BJ (cell line): ENCODE measurements at regions of chr22 and their contacts with region 1.

Region 1: GRCh38 chr22:37817705-37818408 is 5.3 kb upstream of the GALR3 start:
- DNase-seq: no peak
- H3K4me3 ChIP-seq: peak overlapping the region; percentile 4; the same call in 1 of the 2 replicates
- H3K27me3 ChIP-seq: peaks cover 2% of the 10 kb centered on the region; the same call in 1 of the 2 replicates
- CTCF ChIP-seq: peak; percentile 79

Region 2: GRCh38 chr22:37807410-37808293 is 10.2 kb before region 1 on chr22 and contains the start of gene GCAT:
- CTCF ChIA-PET with region 1: interaction called, 59 read pairs
- POLR2A ChIA-PET with region 1: no interaction called
- DNase-seq: peak; percentile 84
- H3K4me3 ChIP-seq: peak within 1 kb of the TSS; percentile 61
- H3K27me3 ChIP-seq: no peaks in the 10 kb centered on the region
- CTCF ChIP-seq: no peak
- polyA plus RNA-seq, gene GCAT: 12.6 and 24.9 TPM in 2 replicates

Region 3: DNA sequence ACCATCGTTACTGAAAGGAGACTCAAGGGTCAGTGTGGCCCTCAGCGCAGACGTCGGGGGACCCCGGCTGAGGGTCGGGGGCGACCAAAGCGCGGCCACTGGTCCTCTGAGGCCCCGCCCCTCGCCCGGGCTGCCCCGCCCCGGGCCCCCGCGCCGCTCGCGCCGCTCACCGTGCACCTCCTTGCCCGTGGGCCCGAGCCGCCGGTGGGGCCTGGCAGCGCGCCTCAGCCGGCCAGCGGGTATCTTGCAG is 25.8 kb after region 1 on chr22:
- CTCF ChIA-PET with region 1: interaction called, 14 read pairs
- POLR2A ChIA-PET with region 1: no interaction called
- DNase-seq: no peak
- H3K4me3 ChIP-seq: peak overlapping the region; percentile 68
- H3K27me3 ChIP-seq: no peaks in the 10 kb centered on the region
- CTCF ChIP-seq: no peak

Region 4: GRCh38 chr22:37855462-37855861 is 37.6 kb after region 1 on chr22:
- CTCF ChIA-PET with region 1: interaction called, 25 read pairs
- POLR2A ChIA-PET with region 1: no interaction called
- DNase-seq: no peak
- H3K4me3 ChIP-seq: no peak overlapping the region
- H3K27me3 ChIP-seq: no peaks in the 10 kb centered on the region
- CTCF ChIP-seq: no peak

Region 5: DNA sequence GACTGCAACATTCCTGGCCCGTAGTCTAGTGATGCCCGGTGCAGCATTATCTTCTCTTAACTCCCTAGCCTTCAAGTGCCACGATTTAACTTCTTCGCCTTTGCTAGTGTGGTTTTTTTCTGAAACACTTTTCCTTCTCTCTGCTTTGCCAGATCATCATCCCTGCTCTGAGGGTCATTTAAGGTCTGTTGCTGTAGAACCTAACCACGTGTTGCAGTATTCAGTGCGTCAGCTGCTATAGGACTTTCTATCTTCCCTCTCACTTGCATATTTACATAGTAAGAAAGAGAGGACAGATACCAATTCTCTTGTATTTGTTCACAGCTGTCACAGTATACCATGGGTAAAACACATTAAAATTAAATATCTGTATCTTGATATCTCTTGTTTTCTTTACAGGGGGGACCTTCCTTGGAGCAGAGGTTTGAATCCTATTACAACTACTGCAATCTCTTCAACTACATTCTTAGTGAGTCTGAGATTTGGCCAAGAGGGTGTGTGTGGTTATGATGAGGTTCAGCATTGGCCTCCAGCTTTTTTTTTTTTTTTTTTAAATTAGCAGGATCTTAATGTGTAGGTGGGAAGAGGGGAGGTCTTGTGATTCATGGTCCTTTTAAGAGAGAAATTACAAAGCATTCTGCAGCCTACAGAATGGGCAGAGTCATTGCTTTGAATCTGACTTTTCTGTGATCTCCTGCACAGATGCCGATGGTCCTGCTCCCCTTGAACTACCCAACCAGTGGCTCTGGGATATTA is 44.9 kb after region 1 on chr22:
- CTCF ChIA-PET with region 1: interaction called, 77 read pairs
- POLR2A ChIA-PET with region 1: no interaction called
- DNase-seq: no peak
- H3K4me3 ChIP-seq: no peak overlapping the region
- H3K27me3 ChIP-seq: no peaks in the 10 kb centered on the region
- CTCF ChIP-seq: no peak

Region 6: DNA sequence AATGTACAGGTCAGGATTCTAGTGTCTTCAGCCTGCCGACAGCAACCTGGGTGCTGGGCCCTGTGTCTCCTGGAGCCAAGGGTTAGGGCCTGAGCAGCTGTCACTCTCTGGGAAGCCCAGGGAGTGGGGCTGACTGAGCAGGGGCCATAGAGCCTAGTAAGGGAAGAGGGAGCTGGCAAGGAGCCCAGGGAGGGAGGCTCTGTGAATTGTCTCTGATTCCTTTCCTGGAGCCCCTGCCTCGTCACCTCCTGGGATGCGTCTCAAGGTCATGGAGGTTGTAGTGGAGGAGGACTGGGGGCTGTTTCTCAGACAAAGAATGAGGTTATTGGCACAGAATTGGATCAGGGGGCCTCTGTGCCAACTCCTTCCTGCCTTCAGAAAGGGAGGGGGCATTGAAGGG is 154.7 kb after region 1 on chr22:
- CTCF ChIA-PET with region 1: interaction called, 82 read pairs
- POLR2A ChIA-PET with region 1: no interaction called
- DNase-seq: no peak
- H3K4me3 ChIP-seq: no peak overlapping the region
- H3K27me3 ChIP-seq: no peaks in the 10 kb centered on the region
- CTCF ChIP-seq: no peak